HCT116 (cell line): ENCODE measurements at regions of chr3 and their contacts with region 1.

Region 1: DNA sequence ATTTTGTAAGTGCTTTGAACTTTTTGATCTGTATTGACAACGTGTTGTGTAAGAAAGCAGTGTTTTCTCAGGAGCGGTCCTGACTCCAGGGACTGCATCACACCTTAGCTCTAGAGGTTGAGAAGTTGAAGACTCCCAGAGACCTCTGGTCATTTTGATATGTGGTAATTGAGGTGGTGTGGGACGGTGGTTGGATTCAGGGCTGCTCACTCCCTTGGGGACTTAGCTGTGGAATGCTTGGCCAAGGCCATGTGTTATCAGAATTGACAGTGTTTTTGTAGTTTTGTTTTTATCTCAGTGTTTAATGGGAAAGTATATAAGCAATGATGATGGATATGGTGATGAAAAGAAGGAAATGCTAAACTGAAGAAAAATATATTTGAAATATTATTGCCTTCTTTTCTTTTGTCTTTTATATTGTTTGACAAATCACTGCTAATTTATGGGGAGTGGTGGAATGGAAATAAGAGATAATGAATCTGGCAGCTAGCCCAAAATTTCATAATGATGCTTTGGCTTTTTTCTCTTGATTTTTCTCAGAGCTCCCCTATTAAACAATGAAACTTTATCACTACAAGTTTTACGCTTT is 16.0 kb downstream of the CMSS1 start:
- DNase-seq: no peak
- ATAC-seq: no peak
- H3K4me3 ChIP-seq: no peak overlapping the region
- H3K27ac ChIP-seq: no peak overlapping the region
- H3K4me1 ChIP-seq: no peaks in the 10 kb centered on the region
- H3K27me3 ChIP-seq: no peaks in the 10 kb centered on the region
- CTCF ChIP-seq: no peak
- POLR2A ChIP-seq: no peak
- RAD21 ChIP-seq: no peak

Region 2: GRCh38 chr3:99499235-99500158 is 334.2 kb before region 1 on chr3:
- CTCF ChIA-PET with region 1: no interaction called
- POLR2A ChIA-PET with region 1: no interaction called
- RAD21 ChIA-PET with region 1: no interaction called
- intact Hi-C with region 1: no loop called
- DNase-seq: peak; percentile 21
- ATAC-seq: peak; percentile 84
- H3K4me3 ChIP-seq: no peak overlapping the region
- H3K27ac ChIP-seq: no peak overlapping the region
- H3K4me1 ChIP-seq: no peaks in the 10 kb centered on the region
- H3K27me3 ChIP-seq: peaks cover 15% of the 10 kb centered on the region
- CTCF ChIP-seq: peak; percentile 47 to 80 (median 75); a peak in 5 of 6 replicates
- POLR2A ChIP-seq: no peak
- RAD21 ChIP-seq: peak; percentile 45

Region 3: DNA sequence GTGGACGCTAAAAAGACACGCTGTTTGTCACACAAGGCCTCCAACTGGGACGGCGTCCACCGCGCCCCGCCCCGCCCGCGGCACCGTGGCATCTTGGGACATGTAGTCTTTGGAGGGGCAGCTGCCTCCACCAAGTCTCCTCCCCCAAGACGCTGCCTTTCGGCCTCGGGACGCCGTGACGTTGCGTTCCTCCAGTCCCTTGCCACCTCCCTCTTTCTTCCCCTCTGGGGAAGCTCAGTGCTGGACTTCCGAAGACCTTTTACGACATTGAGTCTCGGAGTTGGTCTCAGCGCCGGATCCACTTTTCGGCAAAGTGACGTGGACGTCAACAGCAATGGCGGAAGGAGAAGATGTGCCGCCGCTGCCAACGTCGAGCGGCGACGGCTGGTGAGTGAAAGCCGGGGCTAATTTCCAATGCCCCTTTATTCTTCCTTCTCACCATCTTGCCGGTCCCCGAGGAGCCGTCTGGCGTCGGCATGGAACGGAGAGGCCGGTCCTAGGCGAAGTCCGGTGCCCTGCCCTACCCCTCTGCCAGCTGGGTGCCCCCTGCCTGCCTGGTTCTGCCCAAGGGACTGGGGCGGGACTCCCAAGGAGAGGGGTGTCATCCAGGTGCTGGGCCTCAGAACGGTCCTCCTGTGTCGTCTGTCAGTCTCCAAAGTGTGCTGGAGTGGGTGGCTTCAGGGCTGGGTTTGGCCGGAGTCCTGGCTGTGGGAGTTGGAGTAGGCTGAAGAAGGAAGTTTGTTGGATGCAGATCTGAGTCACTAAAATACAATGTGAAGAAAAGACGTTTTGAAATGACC is 427.2 kb after region 1 on chr3 and contains the start of gene TBC1D23:
- CTCF ChIA-PET with region 1: interaction called, 10 read pairs
- POLR2A ChIA-PET with region 1: no interaction called
- RAD21 ChIA-PET with region 1: no interaction called
- intact Hi-C with region 1: no loop called
- DNase-seq: peak; percentile 99
- ATAC-seq: peak; percentile 100
- H3K4me3 ChIP-seq: peak within 1 kb of the TSS; percentile 90 to 92
- H3K27ac ChIP-seq: peak within 1 kb of the TSS; percentile 50
- H3K4me1 ChIP-seq: peaks cover 6 to 16% of the 10 kb centered on the region in 2 experiments; a peak in 3 of 4 replicates
- H3K27me3 ChIP-seq: no peaks in the 10 kb centered on the region
- CTCF ChIP-seq: no peak
- POLR2A ChIP-seq: peak; percentile 59
- RAD21 ChIP-seq: no peak; the same call in 1 of the 2 replicates
- total RNA-seq, gene TBC1D23: 21.9 TPM